HCT116 (cell line): ENCODE measurements at regions of chr16 and their contacts with region 1.

Region 1: DNA sequence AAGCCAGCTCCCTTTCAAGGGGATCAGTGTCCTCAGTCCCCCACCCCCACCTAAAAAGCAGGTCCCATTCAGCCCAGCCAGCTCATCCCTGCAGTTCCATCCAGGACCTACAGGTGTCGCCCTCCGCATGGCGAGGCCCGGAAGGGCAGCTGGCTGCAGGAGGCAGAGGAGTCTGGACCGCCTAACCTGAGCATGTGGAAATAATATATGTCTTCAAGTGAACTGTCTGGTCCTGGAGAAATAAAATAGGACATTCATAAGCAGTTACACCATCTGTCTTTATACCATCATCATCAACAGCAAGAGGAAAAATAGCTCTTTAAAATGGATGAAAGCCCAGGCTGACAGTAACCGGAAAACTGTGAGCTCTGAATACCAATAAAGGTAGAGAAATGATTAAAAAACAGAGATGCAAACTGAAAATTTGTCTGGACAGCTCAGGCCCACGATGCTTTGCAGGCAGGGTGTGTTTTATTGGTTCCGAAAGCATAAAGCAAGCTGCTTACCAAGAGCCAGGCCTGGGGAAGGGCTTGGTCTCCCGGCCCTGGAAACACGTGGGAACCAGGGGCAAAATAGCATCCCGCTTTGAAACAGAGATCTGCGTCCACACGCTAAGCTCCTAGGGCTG is 215.2 kb downstream of the ZFHX3 start:
- DNase-seq: no peak
- ATAC-seq: peak; percentile 94
- H3K4me3 ChIP-seq: no peak overlapping the region
- H3K27ac ChIP-seq: no peak overlapping the region
- H3K4me1 ChIP-seq: peaks cover 0 to 4% of the 10 kb centered on the region in 2 experiments; a peak in 1 of 4 replicates
- H3K27me3 ChIP-seq: no peaks in the 10 kb centered on the region
- CTCF ChIP-seq: peak; percentile 76 to 99 (median 99); a peak in 5 of 6 replicates
- POLR2A ChIP-seq: no peak
- RAD21 ChIP-seq: peak; percentile 95

Region 2: DNA sequence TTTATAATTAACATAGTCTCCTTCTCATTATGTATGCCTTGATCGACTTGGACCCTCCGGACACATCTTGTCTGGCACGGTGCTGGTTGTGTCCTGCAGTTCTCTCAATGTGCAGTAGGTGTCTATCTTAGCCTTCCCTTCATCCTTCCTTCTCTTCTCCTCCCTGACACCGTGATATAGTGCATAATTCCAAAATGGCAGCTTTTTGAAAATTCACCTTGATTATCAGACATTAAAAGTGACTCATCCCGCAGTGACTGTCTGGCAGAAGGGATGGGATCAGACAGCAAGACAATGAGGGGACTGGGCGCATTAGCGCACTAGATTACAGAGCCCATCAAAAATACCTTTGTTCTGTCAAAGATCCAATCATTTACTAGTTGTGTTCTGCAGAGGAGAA is 590.8 kb before region 1 on chr16:
- CTCF ChIA-PET with region 1: no interaction called
- POLR2A ChIA-PET with region 1: no interaction called
- RAD21 ChIA-PET with region 1: no interaction called
- intact Hi-C with region 1: loop called (anchors 10 kb)
- DNase-seq: peak; percentile 39
- ATAC-seq: peak; percentile 99
- H3K4me3 ChIP-seq: no peak overlapping the region
- H3K27ac ChIP-seq: no peak overlapping the region
- H3K4me1 ChIP-seq: peaks cover 0 to 2% of the 10 kb centered on the region in 2 experiments; a peak in 1 of 4 replicates
- H3K27me3 ChIP-seq: no peaks in the 10 kb centered on the region
- CTCF ChIP-seq: peak; percentile 54 to 83 (median 75); a peak in 5 of 6 replicates
- POLR2A ChIP-seq: no peak
- RAD21 ChIP-seq: peak; percentile 88

Region 3: DNA sequence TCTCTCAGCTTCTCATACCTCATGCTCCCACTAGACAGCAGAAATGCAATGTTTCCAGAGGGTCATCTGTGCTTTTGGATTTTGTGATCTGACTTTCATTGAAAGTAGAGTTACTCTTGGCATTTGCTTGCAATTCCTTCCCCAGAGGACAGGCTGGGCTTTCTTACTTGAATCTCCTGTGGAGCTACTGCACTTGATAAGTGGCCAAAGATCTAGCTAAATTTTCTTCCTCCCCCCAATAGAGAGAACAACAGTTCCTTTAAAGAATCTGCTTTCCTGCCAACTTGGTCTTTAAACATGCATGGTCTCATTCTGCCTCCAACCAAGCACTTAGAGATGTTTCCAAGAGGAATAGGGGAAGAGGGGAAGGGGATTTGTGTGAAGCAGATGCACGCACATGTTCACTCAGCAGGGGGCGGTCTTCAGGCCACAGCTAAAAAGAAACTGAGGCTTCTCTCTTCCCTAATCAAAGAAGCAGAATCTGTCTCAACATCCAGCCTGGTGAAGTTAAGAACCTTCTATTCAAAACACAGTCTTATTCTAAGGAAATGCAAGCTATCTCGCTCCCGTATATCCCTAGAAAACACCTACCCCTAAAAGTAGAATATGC is 14.4 kb before region 1 on chr16:
- CTCF ChIA-PET with region 1: interaction called, 14 read pairs
- POLR2A ChIA-PET with region 1: no interaction called
- RAD21 ChIA-PET with region 1: no interaction called
- intact Hi-C with region 1: no loop called
- DNase-seq: no peak
- ATAC-seq: no peak
- H3K4me3 ChIP-seq: no peak overlapping the region
- H3K27ac ChIP-seq: no peak overlapping the region
- H3K4me1 ChIP-seq: no peaks in the 10 kb centered on the region
- H3K27me3 ChIP-seq: no peaks in the 10 kb centered on the region
- CTCF ChIP-seq: peak; percentile 8 to 44 (median 27); a peak in 3 of 6 replicates
- POLR2A ChIP-seq: no peak
- RAD21 ChIP-seq: no peak

Region 4: DNA sequence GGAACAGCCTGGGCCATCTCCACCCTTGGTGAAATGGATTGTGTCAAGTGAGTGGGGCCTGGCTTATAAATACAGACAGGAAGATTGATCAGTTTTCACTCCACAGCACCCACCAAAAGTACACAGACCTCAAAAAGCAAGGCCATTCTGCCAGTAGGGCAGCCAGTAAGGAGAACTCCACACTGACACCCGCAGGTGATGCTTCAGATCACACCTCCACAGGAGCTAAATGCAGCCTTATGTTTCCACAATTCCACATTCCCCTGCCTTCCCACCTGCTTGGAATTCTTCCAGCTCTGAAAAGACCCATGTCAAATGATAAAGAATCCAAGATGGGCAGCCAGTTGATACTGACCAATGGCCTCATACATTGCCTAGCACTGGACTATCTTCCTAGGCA is 24.1 kb after region 1 on chr16:
- CTCF ChIA-PET with region 1: interaction called, 11 read pairs
- POLR2A ChIA-PET with region 1: no interaction called
- RAD21 ChIA-PET with region 1: no interaction called
- intact Hi-C with region 1: no loop called
- DNase-seq: no peak
- ATAC-seq: peak; percentile 80
- H3K4me3 ChIP-seq: no peak overlapping the region
- H3K27ac ChIP-seq: no peak overlapping the region
- H3K4me1 ChIP-seq: peaks cover 0 to 4% of the 10 kb centered on the region in 2 experiments; a peak in 1 of 4 replicates
- H3K27me3 ChIP-seq: no peaks in the 10 kb centered on the region
- CTCF ChIP-seq: peak in 2 of 3 experiments; percentile 52 to 63; a peak in 4 of 6 replicates
- POLR2A ChIP-seq: no peak
- RAD21 ChIP-seq: peak; percentile 33; the same call in 1 of the 2 replicates

Region 5: GRCh38 chr16:73176577-73177013 is 343.9 kb after region 1 on chr16:
- CTCF ChIA-PET with region 1: interaction called, 14 read pairs
- POLR2A ChIA-PET with region 1: no interaction called
- RAD21 ChIA-PET with region 1: no interaction called
- intact Hi-C with region 1: no loop called
- DNase-seq: peak; percentile 48
- ATAC-seq: peak; percentile 76
- H3K4me3 ChIP-seq: no peak overlapping the region
- H3K27ac ChIP-seq: no peak overlapping the region
- H3K4me1 ChIP-seq: no peaks in the 10 kb centered on the region; a peak in 2 of 4 replicates
- H3K27me3 ChIP-seq: no peaks in the 10 kb centered on the region
- CTCF ChIP-seq: peak; percentile 29 to 56 (median 47); a peak in 3 of 6 replicates
- POLR2A ChIP-seq: no peak
- RAD21 ChIP-seq: peak; percentile 50; the same call in 1 of the 2 replicates